ENCODE measurements at regions of chr1 and their contacts with region 1.

Region 1: DNA sequence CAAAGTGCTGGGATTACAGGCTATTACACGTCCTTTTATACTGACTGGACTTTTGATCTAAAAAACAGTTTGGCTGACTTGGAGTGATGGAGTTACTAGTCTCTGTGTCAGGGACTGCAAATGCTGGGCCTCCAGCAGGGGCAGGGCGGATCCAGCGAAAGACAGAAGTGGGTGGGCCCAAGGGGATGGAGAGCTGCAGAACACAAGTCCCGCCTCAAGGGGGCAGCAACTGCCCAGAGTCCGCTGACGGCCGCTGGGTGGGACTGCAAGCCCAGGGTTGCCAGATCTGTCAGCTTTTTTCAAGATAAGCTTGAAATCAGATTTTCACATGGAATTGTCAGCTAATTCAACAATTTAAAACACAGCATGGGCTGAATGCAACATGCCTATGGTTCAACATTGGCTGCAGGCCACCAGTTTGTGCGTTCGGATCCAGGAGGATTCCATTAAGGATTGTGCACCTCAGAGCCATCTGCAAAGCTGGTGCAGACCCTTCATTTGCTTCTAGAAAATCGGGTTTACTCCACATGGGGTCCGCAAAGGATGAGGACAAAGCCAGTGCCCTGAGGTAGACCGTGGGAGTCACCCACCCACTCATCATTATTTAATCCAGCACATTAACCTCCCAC is 10.7 kb downstream of the STMN1 start:
- DNase-seq: peak; percentile 61 to 86
- H3K4me3 ChIP-seq: no peak overlapping the region
- H3K27ac ChIP-seq: no peak overlapping the region
- H3K4me1 ChIP-seq: peaks cover 33% of the 10 kb centered on the region
- H3K27me3 ChIP-seq: no peaks in the 10 kb centered on the region
- CTCF ChIP-seq: peak; percentile 86

Region 2: DNA sequence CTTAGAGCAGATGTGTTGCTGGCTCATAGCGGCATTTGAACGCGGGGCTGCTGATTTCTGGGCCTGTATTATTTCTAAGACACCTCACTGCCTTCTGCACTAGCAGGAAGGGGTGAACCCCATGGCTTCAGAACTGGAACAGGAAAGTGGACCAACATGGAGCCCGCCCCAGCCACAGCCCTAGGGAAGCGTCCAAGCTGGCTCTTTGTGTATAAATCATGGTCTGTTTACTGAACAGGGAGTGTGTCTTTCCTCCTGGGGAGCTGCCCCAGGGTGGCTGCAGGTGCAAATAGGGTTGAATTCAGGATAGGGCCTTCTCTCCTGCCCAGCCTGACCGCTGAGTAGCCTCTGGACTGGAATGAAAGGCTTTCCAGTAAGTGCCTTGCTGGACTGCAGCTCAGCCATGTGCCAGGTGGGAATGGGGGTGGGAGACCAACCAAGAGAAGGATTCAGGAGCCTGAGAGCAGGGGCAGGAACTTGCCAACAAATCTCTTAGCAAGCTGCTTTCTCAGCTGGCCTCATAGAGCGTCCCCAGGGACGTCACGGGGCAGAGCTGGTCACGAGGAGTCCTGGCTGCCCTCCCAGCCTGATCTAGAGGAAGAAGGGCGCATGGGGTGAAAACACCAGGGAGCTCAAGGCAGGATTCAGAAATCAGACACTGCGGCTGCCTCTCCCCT is 152.2 kb before region 1 on chr1:
- CTCF ChIA-PET with region 1: no interaction called
- POLR2A ChIA-PET with region 1: no interaction called
- intact Hi-C with region 1: no loop called
- DNase-seq: no peak
- H3K4me3 ChIP-seq: no peak overlapping the region
- H3K27ac ChIP-seq: no peak overlapping the region
- H3K4me1 ChIP-seq: no peaks in the 10 kb centered on the region
- H3K27me3 ChIP-seq: no peaks in the 10 kb centered on the region
- CTCF ChIP-seq: no peak

Region 3: GRCh38 chr1:25837262-25837875 is 58.1 kb before region 1 on chr1:
- CTCF ChIA-PET with region 1: interaction called, 3 read pairs
- POLR2A ChIA-PET with region 1: no interaction called
- intact Hi-C with region 1: loop called (anchors 2 kb)
- DNase-seq: no peak
- H3K4me3 ChIP-seq: no peak overlapping the region
- H3K27ac ChIP-seq: 0 out of 2 replicates have a peak overlapping the region, but pooled peaks have one; percentile 12
- H3K4me1 ChIP-seq: no peaks in the 10 kb centered on the region
- H3K27me3 ChIP-seq: no peaks in the 10 kb centered on the region
- CTCF ChIP-seq: peak; percentile 59

Region 4: DNA sequence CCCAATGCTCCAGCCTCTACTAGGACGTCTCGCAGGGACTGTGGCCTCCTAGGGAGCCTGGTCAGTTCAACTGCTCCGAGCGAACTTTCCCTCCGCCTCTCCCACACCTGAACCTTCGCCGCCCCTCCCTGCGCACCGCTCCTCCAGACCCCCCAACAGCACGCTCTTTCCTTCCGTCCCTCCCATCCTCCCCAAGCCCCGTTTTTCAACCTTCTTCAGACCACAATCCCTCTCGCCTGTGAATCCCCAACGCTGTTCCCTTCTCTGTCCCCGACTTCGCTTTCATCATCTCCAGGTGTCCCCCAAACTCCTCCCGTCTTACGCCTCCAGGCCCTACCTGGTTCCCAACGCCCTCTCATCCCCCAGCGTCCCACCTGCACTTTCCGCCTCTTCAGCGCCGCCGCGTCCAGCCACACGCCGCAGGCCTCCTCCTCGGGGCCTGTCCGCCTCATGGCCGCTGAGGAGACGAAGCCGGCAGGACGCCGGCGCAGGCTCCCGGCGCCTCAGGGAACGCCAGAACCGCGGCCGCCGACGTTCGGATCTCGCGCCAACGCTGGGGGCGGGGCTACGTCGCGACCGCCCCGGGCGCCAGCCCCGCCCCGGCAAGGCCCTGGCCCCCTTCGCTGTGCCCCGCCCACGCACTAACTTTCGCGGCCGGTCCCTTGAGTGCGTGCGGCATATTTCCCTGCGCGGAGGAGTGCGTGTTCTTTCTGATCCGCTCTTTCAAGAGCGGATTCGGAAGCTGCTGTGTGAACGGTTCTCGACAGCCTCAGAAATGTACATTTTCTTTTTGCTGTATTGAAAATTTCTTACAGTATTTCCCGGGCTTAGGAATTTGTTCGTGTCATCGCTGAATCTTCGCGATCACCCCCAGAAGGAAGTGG is 36.3 kb before region 1 on chr1 and contains the start of gene AUNIP:
- CTCF ChIA-PET with region 1: no interaction called
- POLR2A ChIA-PET with region 1: interaction called, 3 read pairs
- intact Hi-C with region 1: loop called (anchors 2 kb)
- DNase-seq: peak; percentile 64 to 89
- H3K4me3 ChIP-seq: peak within 1 kb of the TSS; percentile 99
- H3K27ac ChIP-seq: peak within 1 kb of the TSS; percentile 74
- H3K4me1 ChIP-seq: peaks cover 10% of the 10 kb centered on the region
- H3K27me3 ChIP-seq: no peaks in the 10 kb centered on the region
- CTCF ChIP-seq: no peak
- total RNA-seq, gene AUNIP: 11.0 and 11.3 TPM in 2 replicates

Region 5: GRCh38 chr1:25874934-25875855 is 20.3 kb before region 1 on chr1 and contains the start of gene PAQR7:
- CTCF ChIA-PET with region 1: interaction called, 8 read pairs
- POLR2A ChIA-PET with region 1: interaction called, 28 read pairs
- intact Hi-C with region 1: loop called (anchors 1 kb)
- DNase-seq: peak; percentile 38 to 85
- H3K4me3 ChIP-seq: peak within 1 kb of the TSS; percentile 71
- H3K27ac ChIP-seq: peak within 1 kb of the TSS; percentile 71
- H3K4me1 ChIP-seq: peaks cover 46% of the 10 kb centered on the region
- H3K27me3 ChIP-seq: no peaks in the 10 kb centered on the region
- CTCF ChIP-seq: no peak
- total RNA-seq, gene PAQR7: 30.2 and 34.0 TPM in 2 replicates

Region 6: DNA sequence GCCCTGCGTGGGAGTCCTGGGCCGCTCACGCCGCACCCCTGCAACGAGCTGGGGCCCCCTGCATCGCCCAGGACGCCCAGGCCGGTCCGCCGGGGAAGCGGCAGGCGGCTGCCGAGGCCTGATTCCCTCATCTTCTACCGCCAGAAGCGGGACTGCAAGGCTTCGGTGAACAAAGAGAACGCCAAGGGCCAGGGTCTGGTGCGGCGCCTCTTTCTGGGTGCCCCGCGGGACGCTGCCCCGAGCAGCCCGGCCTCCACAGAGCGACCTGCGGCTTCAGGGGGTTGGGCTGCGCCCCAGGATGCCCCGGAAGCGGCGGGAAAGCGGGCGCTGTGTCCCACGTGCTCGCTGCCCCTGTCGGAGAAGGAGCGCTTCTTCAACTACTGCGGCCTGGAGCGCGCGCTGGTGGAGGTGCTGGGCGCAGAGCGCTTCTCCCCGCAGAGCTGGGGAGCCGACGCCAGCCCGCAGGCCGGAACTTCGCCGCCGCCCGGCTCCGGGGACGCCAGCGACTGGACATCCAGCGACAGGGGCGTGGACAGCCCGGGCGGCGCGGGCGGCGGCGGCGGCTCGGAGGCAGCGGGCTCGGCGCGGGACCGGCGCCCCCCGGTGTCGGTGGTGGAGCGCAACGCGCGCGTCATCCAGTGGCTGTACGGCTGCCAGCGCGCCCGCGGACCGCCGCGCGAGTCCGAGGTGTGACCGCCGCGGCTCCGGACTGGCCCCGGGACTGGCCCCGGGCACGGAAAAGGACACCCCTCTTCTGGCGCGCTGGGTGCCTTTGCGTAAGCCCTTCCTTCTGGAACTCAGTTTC is 266.1 kb after region 1 on chr1:
- CTCF ChIA-PET with region 1: no interaction called
- POLR2A ChIA-PET with region 1: interaction called, 12 read pairs
- intact Hi-C with region 1: loop called (anchors 10 kb)
- DNase-seq: peak in 1 of 2 experiments; percentile 70
- H3K4me3 ChIP-seq: peak overlapping the region; percentile 56; the same call in 1 of the 2 replicates
- H3K27ac ChIP-seq: no peak overlapping the region
- H3K4me1 ChIP-seq: peaks cover 3% of the 10 kb centered on the region; the same call in 1 of the 2 replicates
- H3K27me3 ChIP-seq: peaks cover 18% of the 10 kb centered on the region
- CTCF ChIP-seq: no peak

Region 7: DNA sequence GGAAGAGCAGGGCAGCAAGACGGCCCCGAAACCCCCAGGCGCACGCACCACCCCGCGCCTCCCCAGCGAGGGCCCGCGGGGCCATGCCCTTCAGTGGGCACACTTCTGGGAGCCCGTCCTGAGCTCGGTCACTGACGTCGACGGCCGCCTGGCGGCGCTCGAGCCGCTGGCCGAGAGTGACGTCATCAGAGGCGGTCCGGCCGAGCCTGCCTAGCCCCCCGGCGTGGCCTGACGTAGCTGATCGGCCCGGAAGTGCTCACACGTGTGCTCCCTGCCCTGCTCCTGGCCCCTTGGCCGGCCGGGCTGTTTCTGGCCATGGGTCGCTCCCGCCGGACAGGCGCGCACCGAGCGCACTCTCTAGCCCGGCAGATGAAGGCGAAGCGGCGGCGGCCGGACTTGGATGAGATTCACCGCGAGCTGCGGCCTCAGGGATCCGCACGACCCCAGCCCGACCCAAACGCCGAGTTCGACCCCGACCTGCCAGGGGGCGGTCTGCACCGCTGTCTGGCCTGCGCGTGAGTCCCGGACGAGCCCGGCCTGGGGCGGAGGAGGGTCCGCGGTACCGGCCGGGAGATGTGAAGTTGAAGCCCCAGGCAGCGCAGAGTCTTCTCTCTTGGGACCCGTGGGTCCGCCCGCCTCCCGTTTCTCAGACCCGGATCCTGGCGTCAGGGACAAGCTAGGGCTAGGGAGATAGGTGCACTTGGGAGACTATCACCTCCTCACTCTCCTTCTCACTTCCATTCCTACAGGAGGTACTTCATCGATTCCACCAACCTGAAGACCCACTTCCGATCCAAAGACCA is 274.4 kb after region 1 on chr1 and contains the start of gene ZNF593:
- CTCF ChIA-PET with region 1: no interaction called
- POLR2A ChIA-PET with region 1: interaction called, 12 read pairs
- intact Hi-C with region 1: loop called (anchors 10 kb)
- DNase-seq: peak; percentile 81 to 89
- H3K4me3 ChIP-seq: peak within 1 kb of the TSS; percentile 99
- H3K27ac ChIP-seq: no peak within 1 kb of the TSS
- H3K4me1 ChIP-seq: peaks cover 6% of the 10 kb centered on the region; the same call in 1 of the 2 replicates
- H3K27me3 ChIP-seq: no peaks in the 10 kb centered on the region
- CTCF ChIP-seq: peak; percentile 86
- total RNA-seq, gene ZNF593: 37.0 and 55.9 TPM in 2 replicates

Region 8: DNA sequence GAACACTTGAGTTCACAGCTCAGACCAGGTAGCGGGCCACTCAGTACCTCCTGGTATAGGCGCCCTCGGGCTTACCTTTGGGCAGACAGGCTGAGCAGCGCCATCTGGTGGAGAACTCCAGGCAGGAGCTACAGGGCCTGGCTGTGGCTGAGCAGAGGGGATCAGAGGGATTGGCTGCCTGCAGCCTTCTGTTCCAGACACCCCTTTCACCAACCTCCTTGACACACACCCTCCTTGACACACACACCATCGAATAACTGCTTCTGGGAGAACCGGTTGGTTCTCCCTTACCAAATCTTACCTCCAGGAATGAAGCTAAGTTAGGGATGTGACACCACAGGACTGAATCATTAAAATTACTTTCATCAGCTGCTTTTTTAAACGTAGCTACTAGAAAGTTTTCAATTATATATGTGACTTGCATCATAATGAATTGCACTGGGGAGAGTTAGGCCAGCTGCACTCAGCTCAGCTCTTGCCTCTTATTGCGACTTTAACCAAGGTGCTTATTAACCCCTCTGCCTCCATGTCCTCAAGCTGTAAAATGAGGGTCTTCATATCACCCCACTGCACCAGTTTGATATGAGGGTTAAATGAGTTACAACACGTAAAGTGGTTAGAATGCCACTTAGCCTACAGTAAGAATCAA is 521.8 kb after region 1 on chr1:
- CTCF ChIA-PET with region 1: interaction called, 11 read pairs
- POLR2A ChIA-PET with region 1: no interaction called
- intact Hi-C with region 1: no loop called
- DNase-seq: peak; percentile 84 to 93
- H3K4me3 ChIP-seq: no peak overlapping the region
- H3K27ac ChIP-seq: peak overlapping the region; percentile 91
- H3K4me1 ChIP-seq: peaks cover 9% of the 10 kb centered on the region
- H3K27me3 ChIP-seq: no peaks in the 10 kb centered on the region
- CTCF ChIP-seq: peak; percentile 79

Measured in PC-9 (cell line).